ENCODE measurements at regions of chr11 and their contacts with region 1.

Region 1: GRCh38 chr11:72026090-72026489 is 27.4 kb downstream of the IL18BP start:
- DNase-seq: no peak
- ATAC-seq: no peak
- H3K4me3 ChIP-seq: no peak overlapping the region
- H3K27ac ChIP-seq: no peak overlapping the region
- H3K4me1 ChIP-seq: peaks cover 32% of the 10 kb centered on the region
- H3K27me3 ChIP-seq: no peaks in the 10 kb centered on the region
- CTCF ChIP-seq: no peak
- POLR2A ChIP-seq: no peak

Region 2: GRCh38 chr11:72091005-72091691 is 65.1 kb after region 1 on chr11:
- intact Hi-C with region 1: loop called (anchors 5 kb)
- DNase-seq: peak; percentile 72 to 83 (median 79)
- ATAC-seq: peak; percentile 93
- H3K4me3 ChIP-seq: no peak overlapping the region
- H3K27ac ChIP-seq: peak overlapping the region in 3 of 4 donors; percentile 28 to 57 (median 43)
- H3K4me1 ChIP-seq: peaks cover 15% of the 10 kb centered on the region
- H3K27me3 ChIP-seq: no peaks in the 10 kb centered on the region
- CTCF ChIP-seq: peak; percentile 55 to 98 (median 82)
- POLR2A ChIP-seq: no peak

Region 3: GRCh38 chr11:72141066-72141465 is 115.0 kb after region 1 on chr11:
- intact Hi-C with region 1: no loop called
- DNase-seq: no peak
- ATAC-seq: no peak
- H3K4me3 ChIP-seq: no peak overlapping the region
- H3K27ac ChIP-seq: no peak overlapping the region
- H3K4me1 ChIP-seq: peaks cover 3% of the 10 kb centered on the region
- H3K27me3 ChIP-seq: no peaks in the 10 kb centered on the region
- CTCF ChIP-seq: no peak
- POLR2A ChIP-seq: no peak

Region 4: DNA sequence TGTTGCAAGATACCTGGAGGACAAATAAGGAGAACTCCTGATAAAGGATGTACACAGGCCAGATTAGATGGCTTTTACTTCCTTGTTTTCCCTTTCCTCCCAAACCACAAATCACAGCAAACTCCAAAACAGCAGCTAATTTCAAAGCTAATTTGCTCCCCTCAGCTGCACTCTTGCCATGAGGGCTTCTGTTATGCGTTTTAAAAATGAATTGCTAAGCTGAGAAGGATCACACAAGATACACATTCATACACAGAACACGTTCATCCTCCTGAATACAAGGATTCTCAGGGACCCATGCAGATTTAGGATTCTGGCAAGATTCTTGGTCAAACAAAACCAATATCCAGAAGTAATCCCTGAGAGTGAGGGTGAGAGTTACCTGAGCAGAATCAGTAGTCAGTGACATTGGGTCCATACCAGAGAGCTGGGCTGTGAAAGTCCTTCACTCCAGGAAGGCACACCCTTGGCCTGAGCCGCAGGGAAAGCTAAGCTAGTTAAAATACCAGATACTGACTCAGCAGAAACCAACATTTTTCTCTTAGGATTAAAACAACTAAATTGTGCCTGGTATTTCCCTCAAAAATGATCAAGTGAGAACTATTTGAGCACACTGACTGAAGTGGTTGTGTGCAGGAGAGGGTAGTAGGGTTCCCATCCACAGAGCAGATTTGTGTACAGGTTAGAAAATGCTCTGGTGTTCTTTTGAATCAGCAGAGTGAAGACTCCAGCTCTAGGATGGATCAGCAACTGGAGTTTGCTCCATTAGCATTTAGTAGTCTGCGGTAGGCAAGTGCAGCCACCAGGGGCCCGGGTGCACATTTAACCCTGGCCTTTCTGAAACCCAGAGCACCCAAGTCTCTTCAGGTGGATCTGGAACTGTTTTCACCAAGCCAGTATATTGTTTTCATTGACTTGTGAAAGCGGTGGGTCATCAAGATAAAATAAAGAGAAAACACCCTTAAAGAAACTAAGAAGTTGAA is 508.8 kb after region 1 on chr11:
- intact Hi-C with region 1: no loop called
- DNase-seq: peak in 1 of 4 donors; percentile 16
- ATAC-seq: no peak
- H3K4me3 ChIP-seq: no peak overlapping the region
- H3K27ac ChIP-seq: peak overlapping the region in 1 of 4 donors; percentile 2
- H3K4me1 ChIP-seq: peaks cover 28% of the 10 kb centered on the region
- H3K27me3 ChIP-seq: no peaks in the 10 kb centered on the region
- CTCF ChIP-seq: peak in 1 of 7 experiments; percentile 11
- POLR2A ChIP-seq: no peak

Measured in body of pancreas (tissue), 4 donors.